Caco-2 (cell line): ENCODE measurements at regions of chr2 and their contacts with region 1.

Region 1: GRCh38 chr2:56132138-56132537 is 51.7 kb upstream of the CCDC85A start:
- DNase-seq: peak in 1 of 2 experiments; percentile 45
- H3K4me3 ChIP-seq: no peak overlapping the region
- H3K4me3 Mint-ChIP-seq: no peak overlapping the region
- H3K27ac Mint-ChIP-seq: no peak overlapping the region
- H3K4me1 ChIP-seq: no peaks in the 10 kb centered on the region
- H3K4me1 Mint-ChIP-seq: no peaks in the 10 kb centered on the region
- H3K27me3 ChIP-seq: no peaks in the 10 kb centered on the region
- H3K27me3 Mint-ChIP-seq: peaks cover 2% of the 10 kb centered on the region
- CTCF ChIP-seq: peak; percentile 36 to 53

Region 2: DNA sequence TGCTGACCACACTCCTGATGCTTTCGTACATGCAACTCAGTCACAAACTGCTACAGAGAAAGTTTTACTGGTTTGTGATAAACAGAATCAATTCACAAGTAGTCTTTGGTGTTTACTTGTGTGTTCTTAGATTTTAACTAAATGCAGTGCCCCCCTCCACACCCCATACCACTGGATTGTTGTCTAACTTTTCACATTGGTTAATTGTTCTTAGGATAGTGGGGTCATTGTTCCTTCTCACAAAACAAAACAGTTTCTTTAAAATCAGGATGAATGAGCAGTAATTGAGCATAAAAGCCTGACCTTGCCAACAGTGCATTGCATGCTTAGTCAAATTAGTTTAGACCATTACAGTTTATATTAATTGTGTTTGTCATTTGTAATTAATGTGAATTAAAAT is 424.4 kb before region 1 on chr2:
- CTCF ChIA-PET with region 1: no interaction called
- POLR2A ChIA-PET with region 1: no interaction called
- intact Hi-C with region 1: no loop called
- DNase-seq: no peak
- H3K4me3 ChIP-seq: no peak overlapping the region
- H3K4me3 Mint-ChIP-seq: no peak overlapping the region
- H3K27ac Mint-ChIP-seq: no peak overlapping the region
- H3K4me1 ChIP-seq: peaks cover 36% of the 10 kb centered on the region
- H3K4me1 Mint-ChIP-seq: peaks cover 42% of the 10 kb centered on the region
- H3K27me3 ChIP-seq: no peaks in the 10 kb centered on the region
- H3K27me3 Mint-ChIP-seq: no peaks in the 10 kb centered on the region
- CTCF ChIP-seq: no peak

Region 3: DNA sequence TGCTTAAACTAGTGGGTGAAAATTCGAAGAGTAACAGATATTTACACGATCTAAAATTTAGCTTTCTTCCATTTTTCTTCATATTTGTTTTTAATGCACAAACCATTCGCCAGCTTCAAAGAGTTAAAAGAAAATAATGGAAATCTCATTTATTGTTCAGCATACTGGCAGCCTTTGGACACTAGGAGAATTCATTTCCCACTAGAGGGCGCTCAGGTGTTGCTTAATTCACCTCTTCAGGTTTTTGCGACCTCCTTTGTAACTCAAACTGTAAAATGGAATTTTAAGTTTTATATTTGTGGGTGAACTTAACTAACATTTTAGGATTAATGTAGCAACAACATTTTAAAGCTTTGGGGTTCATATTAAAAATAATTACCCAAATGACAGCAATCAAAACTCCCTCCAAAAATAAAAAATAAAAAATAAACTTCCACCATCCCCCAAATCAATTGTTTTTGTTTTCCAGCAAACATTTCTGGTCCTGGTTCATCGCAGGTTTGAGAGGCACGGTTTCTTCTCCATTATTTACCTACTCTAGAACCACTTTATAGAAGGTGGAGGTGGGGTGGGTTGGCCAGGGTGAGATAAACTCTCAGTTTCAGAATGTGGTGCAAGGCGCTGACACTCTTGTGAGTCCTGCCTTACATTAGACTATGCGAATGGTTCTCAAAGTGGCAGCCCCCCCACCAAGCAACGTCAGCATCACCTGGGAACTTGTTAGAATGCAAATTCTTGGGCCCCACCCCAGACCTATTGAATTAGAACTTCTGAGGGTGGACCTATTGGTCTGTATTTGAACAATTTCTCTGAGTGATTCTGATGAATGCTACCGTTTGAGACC is 413.8 kb before region 1 on chr2:
- CTCF ChIA-PET with region 1: no interaction called
- POLR2A ChIA-PET with region 1: no interaction called
- intact Hi-C with region 1: loop called (anchors 1 kb)
- DNase-seq: peak; percentile 65 to 81
- H3K4me3 ChIP-seq: no peak overlapping the region
- H3K4me3 Mint-ChIP-seq: no peak overlapping the region
- H3K27ac Mint-ChIP-seq: no peak overlapping the region
- H3K4me1 ChIP-seq: peaks cover 39% of the 10 kb centered on the region
- H3K4me1 Mint-ChIP-seq: peaks cover 31% of the 10 kb centered on the region
- H3K27me3 ChIP-seq: no peaks in the 10 kb centered on the region
- H3K27me3 Mint-ChIP-seq: no peaks in the 10 kb centered on the region
- CTCF ChIP-seq: peak; percentile 79 to 90

Region 4: DNA sequence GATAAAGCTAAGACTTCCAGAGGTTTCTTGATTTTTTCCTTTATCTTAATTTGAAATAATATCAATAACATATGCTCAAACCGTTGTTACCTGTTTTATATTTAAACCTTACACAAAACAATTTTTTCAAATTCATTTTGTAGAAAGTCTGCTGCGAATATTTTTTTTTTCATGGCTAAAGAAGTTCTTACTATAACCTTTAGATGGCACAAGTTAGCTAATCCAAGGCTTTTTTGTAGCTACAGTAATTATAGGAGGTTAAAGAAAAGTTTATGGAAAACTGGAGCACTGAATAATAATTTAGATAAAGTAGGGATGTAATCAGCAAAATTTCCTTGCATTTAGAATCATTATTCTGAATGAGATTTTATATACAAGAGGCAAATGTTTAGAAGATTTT is 360.5 kb before region 1 on chr2:
- CTCF ChIA-PET with region 1: interaction called, 3 read pairs
- POLR2A ChIA-PET with region 1: no interaction called
- intact Hi-C with region 1: loop called (anchors 1 kb)
- DNase-seq: peak in 1 of 2 experiments; percentile 14
- H3K4me3 ChIP-seq: no peak overlapping the region
- H3K4me3 Mint-ChIP-seq: no peak overlapping the region
- H3K27ac Mint-ChIP-seq: peak overlapping the region; percentile 18
- H3K4me1 ChIP-seq: peaks cover 7% of the 10 kb centered on the region
- H3K4me1 Mint-ChIP-seq: peaks cover 13% of the 10 kb centered on the region
- H3K27me3 ChIP-seq: no peaks in the 10 kb centered on the region
- H3K27me3 Mint-ChIP-seq: no peaks in the 10 kb centered on the region
- CTCF ChIP-seq: peak; percentile 64

Region 5: GRCh38 chr2:55923982-55924321 is 208.2 kb before region 1 on chr2:
- CTCF ChIA-PET with region 1: no interaction called
- POLR2A ChIA-PET with region 1: no interaction called
- intact Hi-C with region 1: no loop called
- DNase-seq: no peak
- H3K4me3 ChIP-seq: no peak overlapping the region
- H3K4me3 Mint-ChIP-seq: no peak overlapping the region
- H3K27ac Mint-ChIP-seq: no peak overlapping the region
- H3K4me1 ChIP-seq: no peaks in the 10 kb centered on the region
- H3K4me1 Mint-ChIP-seq: no peaks in the 10 kb centered on the region
- H3K27me3 ChIP-seq: no peaks in the 10 kb centered on the region; the same call in 1 of the 2 replicates
- H3K27me3 Mint-ChIP-seq: no peaks in the 10 kb centered on the region
- CTCF ChIP-seq: no peak

Region 6: GRCh38 chr2:56009758-56010458 is 122.2 kb before region 1 on chr2:
- CTCF ChIA-PET with region 1: no interaction called
- POLR2A ChIA-PET with region 1: no interaction called
- intact Hi-C with region 1: loop called (anchors 5 kb)
- DNase-seq: peak in 1 of 2 experiments; percentile 15
- H3K4me3 ChIP-seq: no peak overlapping the region
- H3K4me3 Mint-ChIP-seq: no peak overlapping the region
- H3K27ac Mint-ChIP-seq: no peak overlapping the region
- H3K4me1 ChIP-seq: no peaks in the 10 kb centered on the region
- H3K4me1 Mint-ChIP-seq: peaks cover 6% of the 10 kb centered on the region
- H3K27me3 ChIP-seq: no peaks in the 10 kb centered on the region
- H3K27me3 Mint-ChIP-seq: no peaks in the 10 kb centered on the region
- CTCF ChIP-seq: peak; percentile 52 to 59

Region 7: DNA sequence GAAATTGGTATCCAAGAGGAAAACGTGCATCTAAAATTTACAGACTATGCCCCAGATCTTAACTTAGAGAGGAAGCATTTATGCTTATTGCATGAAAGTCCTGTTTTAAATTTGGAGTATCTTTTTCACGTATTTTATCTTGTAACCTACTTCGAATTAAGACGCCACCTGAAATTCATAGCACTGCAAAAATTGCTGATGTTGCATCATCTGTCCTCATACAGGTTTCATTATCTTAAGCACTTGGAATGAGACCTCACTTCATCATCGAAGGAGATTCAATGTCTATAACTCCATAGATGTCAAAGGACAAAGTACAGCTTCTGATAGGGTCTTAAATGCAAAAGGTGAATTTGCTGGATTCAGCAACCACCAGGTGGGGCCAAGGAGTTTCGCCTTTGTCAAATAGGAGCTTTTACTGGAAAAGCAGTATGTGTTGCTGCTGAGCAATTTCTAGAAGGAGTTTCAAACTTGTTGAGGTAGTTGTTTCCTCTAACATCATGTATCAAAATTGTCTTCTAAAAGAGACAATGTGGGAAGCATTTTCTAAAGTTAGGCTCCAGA is 54.7 kb before region 1 on chr2:
- CTCF ChIA-PET with region 1: interaction called, 18 read pairs
- POLR2A ChIA-PET with region 1: no interaction called
- intact Hi-C with region 1: loop called (anchors 1 kb)
- DNase-seq: peak; percentile 55 to 68
- H3K4me3 ChIP-seq: no peak overlapping the region
- H3K4me3 Mint-ChIP-seq: no peak overlapping the region
- H3K27ac Mint-ChIP-seq: no peak overlapping the region
- H3K4me1 ChIP-seq: no peaks in the 10 kb centered on the region
- H3K4me1 Mint-ChIP-seq: no peaks in the 10 kb centered on the region
- H3K27me3 ChIP-seq: no peaks in the 10 kb centered on the region
- H3K27me3 Mint-ChIP-seq: peaks cover 12% of the 10 kb centered on the region
- CTCF ChIP-seq: peak; percentile 71 to 81

Region 8: GRCh38 chr2:56108806-56109205 is 23.3 kb before region 1 on chr2:
- CTCF ChIA-PET with region 1: interaction called, 5 read pairs
- POLR2A ChIA-PET with region 1: no interaction called
- intact Hi-C with region 1: loop called (anchors 2 kb)
- DNase-seq: peak in 1 of 2 experiments; percentile 20
- H3K4me3 ChIP-seq: no peak overlapping the region
- H3K4me3 Mint-ChIP-seq: no peak overlapping the region
- H3K27ac Mint-ChIP-seq: no peak overlapping the region
- H3K4me1 ChIP-seq: no peaks in the 10 kb centered on the region
- H3K4me1 Mint-ChIP-seq: peaks cover 7% of the 10 kb centered on the region
- H3K27me3 ChIP-seq: no peaks in the 10 kb centered on the region
- H3K27me3 Mint-ChIP-seq: peaks cover 18% of the 10 kb centered on the region
- CTCF ChIP-seq: peak; percentile 28 to 33

Region 9: DNA sequence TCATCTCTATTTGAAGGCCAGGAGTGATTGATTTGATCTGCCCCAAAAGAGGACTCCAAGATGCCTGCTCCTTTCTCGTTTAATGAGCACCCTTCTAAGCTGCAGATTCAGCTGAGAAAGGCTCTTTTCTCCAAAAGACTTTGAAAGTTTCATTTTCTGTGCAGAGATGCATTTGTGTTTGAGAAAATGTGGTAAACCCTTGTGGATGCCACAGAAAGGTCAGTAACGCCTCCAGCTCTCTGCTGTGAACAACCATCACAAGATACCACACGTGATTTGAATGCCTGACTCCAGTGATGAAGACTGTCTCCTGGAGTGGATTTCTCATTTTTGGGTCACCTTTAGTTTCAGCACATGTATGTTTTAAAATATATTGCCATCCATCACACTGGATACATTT is 16.7 kb after region 1 on chr2:
- CTCF ChIA-PET with region 1: no interaction called
- POLR2A ChIA-PET with region 1: no interaction called
- intact Hi-C with region 1: no loop called
- DNase-seq: no peak
- H3K4me3 ChIP-seq: no peak overlapping the region
- H3K4me3 Mint-ChIP-seq: no peak overlapping the region
- H3K27ac Mint-ChIP-seq: no peak overlapping the region
- H3K4me1 ChIP-seq: no peaks in the 10 kb centered on the region
- H3K4me1 Mint-ChIP-seq: no peaks in the 10 kb centered on the region
- H3K27me3 ChIP-seq: 0 out of 2 replicates have a peak, but pooled peaks cover 1% of the 10 kb centered on the region
- H3K27me3 Mint-ChIP-seq: peaks cover 16% of the 10 kb centered on the region
- CTCF ChIP-seq: no peak

Region 10: DNA sequence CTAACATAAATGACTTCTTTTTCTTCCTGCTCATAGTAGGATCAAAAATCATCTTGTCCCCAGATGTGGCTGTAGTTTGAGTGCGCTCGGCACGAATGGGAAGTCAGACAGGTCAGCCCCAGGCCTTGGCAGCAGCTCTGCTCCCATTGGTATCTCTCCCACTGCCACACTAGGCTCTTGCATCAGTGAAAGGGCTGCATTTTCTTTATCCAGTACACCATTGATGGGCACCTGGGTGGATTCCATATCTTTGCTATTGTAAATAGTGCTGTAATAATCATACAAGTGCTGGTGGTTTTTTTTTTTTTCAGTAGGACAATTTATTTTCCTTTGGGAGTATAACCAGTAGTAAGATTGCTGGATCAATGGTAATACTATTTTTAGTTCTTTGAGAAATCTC is 917.1 kb after region 1 on chr2:
- CTCF ChIA-PET with region 1: no interaction called
- POLR2A ChIA-PET with region 1: no interaction called
- intact Hi-C with region 1: no loop called
- DNase-seq: no peak
- H3K4me3 ChIP-seq: no peak overlapping the region
- H3K4me3 Mint-ChIP-seq: no peak overlapping the region
- H3K27ac Mint-ChIP-seq: no peak overlapping the region
- H3K4me1 ChIP-seq: no peaks in the 10 kb centered on the region
- H3K4me1 Mint-ChIP-seq: no peaks in the 10 kb centered on the region
- H3K27me3 ChIP-seq: no peaks in the 10 kb centered on the region
- H3K27me3 Mint-ChIP-seq: no peaks in the 10 kb centered on the region
- CTCF ChIP-seq: no peak

Region 11: DNA sequence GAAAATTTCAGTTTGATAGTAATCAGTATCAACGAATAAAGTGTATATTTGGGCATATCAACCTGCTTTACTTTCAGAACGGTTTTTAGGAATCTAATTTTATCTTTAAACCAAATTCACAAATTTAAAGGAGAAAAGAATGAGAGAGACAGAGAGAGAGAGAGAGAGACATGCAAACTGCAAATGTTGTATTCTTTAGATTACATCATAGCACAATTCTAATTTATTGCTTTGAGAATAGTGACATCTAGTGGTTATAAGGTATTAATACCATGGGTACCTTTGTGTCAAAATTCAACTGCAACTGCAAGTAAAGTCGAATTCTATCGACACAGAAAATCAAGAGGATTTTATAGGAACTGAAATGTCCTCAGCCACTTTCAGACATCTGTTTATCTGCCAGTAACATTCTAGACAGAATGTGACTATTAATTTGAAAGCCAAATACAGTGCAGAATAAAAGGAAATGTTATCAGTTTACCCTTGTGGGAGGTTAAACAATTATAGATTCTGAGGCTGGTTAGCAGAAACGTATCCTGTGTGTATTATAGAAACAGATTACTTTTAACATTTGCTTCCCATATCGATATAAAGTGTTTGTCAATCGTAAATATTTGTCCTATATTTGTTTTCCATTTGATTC is 1384.7 kb after region 1 on chr2:
- CTCF ChIA-PET with region 1: no interaction called
- POLR2A ChIA-PET with region 1: no interaction called
- intact Hi-C with region 1: loop called (anchors 1 kb)
- DNase-seq: no peak
- H3K4me3 ChIP-seq: no peak overlapping the region
- H3K4me3 Mint-ChIP-seq: no peak overlapping the region
- H3K27ac Mint-ChIP-seq: no peak overlapping the region
- H3K4me1 ChIP-seq: no peaks in the 10 kb centered on the region
- H3K4me1 Mint-ChIP-seq: no peaks in the 10 kb centered on the region
- H3K27me3 ChIP-seq: no peaks in the 10 kb centered on the region
- H3K27me3 Mint-ChIP-seq: peaks cover 2% of the 10 kb centered on the region
- CTCF ChIP-seq: peak; percentile 40 to 43